Caco-2 (cell line): ENCODE measurements at regions of chr12 and their contacts with region 1.

Region 1: GRCh38 chr12:63052701-63053100 is 98.3 kb downstream of the AVPR1A start:
- DNase-seq: peak; percentile 64 to 75
- H3K4me3 ChIP-seq: no peak overlapping the region
- H3K4me3 Mint-ChIP-seq: no peak overlapping the region
- H3K27ac Mint-ChIP-seq: peak overlapping the region; percentile 30
- H3K4me1 ChIP-seq: peaks cover 34% of the 10 kb centered on the region
- H3K4me1 Mint-ChIP-seq: peaks cover 47% of the 10 kb centered on the region
- H3K27me3 ChIP-seq: no peaks in the 10 kb centered on the region
- H3K27me3 Mint-ChIP-seq: no peaks in the 10 kb centered on the region
- CTCF ChIP-seq: no peak

Region 2: DNA sequence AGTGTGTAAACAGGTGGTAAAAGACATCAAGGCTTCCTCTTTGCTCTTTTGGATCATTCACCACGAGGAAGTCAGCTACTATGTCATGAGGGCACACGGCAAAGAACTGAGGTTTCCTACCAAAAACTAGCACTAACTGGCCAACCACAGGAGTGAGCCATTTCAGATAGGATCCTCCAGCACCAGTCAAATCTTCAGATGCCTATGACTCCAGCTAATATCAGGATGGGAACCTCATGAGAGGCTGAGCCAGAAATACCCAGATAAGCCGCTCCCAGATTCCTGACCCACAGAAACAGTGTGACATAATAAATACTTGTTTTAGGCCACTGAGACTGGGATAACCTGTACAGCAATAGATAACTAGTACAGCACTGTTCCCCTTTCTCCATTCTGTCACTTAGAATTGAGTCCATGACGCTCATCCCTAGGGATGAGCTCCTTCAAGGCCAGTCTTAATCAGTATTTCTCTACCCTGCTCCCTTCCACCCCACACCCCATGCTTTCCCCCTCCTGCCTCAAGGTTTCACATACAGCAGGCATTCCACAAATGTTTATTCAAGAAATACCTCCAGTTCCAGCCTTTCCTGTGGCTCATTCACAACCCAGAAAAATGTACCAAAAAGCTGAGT is 186.1 kb before region 1 on chr12:
- CTCF ChIA-PET with region 1: no interaction called
- POLR2A ChIA-PET with region 1: no interaction called
- intact Hi-C with region 1: loop called (anchors 1 kb)
- DNase-seq: peak; percentile 76 to 86
- H3K4me3 ChIP-seq: no peak overlapping the region
- H3K4me3 Mint-ChIP-seq: peak overlapping the region; percentile 56
- H3K27ac Mint-ChIP-seq: peak overlapping the region; percentile 89
- H3K4me1 ChIP-seq: peaks cover 91% of the 10 kb centered on the region
- H3K4me1 Mint-ChIP-seq: peaks cover 46% of the 10 kb centered on the region
- H3K27me3 ChIP-seq: no peaks in the 10 kb centered on the region
- H3K27me3 Mint-ChIP-seq: no peaks in the 10 kb centered on the region
- CTCF ChIP-seq: no peak

Region 3: DNA sequence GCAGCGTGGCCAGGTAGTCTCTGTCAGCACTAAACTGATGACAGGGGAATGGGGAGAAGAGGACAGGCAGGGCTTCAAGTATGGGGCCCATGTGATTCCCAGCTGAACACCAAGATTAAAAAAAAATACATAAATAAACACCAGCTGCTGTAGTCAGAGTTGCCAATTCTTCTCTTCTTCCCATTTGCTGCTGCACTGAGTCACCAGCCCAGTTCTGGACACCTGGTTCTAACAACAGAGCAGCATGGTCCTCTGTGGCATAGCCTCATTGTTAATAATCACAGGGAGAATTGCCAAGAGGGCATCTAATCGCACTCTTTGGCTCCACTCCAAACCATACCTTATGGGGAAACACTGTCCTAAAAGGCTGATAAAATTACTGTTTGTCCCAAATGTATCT is 132.9 kb before region 1 on chr12:
- CTCF ChIA-PET with region 1: no interaction called
- POLR2A ChIA-PET with region 1: no interaction called
- intact Hi-C with region 1: no loop called
- DNase-seq: no peak
- H3K4me3 ChIP-seq: no peak overlapping the region
- H3K4me3 Mint-ChIP-seq: no peak overlapping the region
- H3K27ac Mint-ChIP-seq: no peak overlapping the region
- H3K4me1 ChIP-seq: peaks cover 4% of the 10 kb centered on the region
- H3K4me1 Mint-ChIP-seq: peaks cover 24% of the 10 kb centered on the region
- H3K27me3 ChIP-seq: no peaks in the 10 kb centered on the region
- H3K27me3 Mint-ChIP-seq: no peaks in the 10 kb centered on the region
- CTCF ChIP-seq: no peak

Region 4: GRCh38 chr12:62998454-62998853 is 54.2 kb before region 1 on chr12:
- CTCF ChIA-PET with region 1: no interaction called
- POLR2A ChIA-PET with region 1: no interaction called
- intact Hi-C with region 1: loop called (anchors 1 kb)
- DNase-seq: peak; percentile 65 to 80
- H3K4me3 ChIP-seq: no peak overlapping the region
- H3K4me3 Mint-ChIP-seq: peak overlapping the region; percentile 67
- H3K27ac Mint-ChIP-seq: peak overlapping the region; percentile 91
- H3K4me1 ChIP-seq: peaks cover 43% of the 10 kb centered on the region
- H3K4me1 Mint-ChIP-seq: peaks cover 30% of the 10 kb centered on the region
- H3K27me3 ChIP-seq: no peaks in the 10 kb centered on the region
- H3K27me3 Mint-ChIP-seq: no peaks in the 10 kb centered on the region
- CTCF ChIP-seq: no peak

Region 5: GRCh38 chr12:63006536-63006935 is 46.2 kb before region 1 on chr12:
- CTCF ChIA-PET with region 1: no interaction called
- POLR2A ChIA-PET with region 1: no interaction called
- intact Hi-C with region 1: loop called (anchors 1 kb)
- DNase-seq: peak; percentile 48 to 55
- H3K4me3 ChIP-seq: no peak overlapping the region
- H3K4me3 Mint-ChIP-seq: peak overlapping the region; percentile 4
- H3K27ac Mint-ChIP-seq: peak overlapping the region; percentile 87
- H3K4me1 ChIP-seq: peaks cover 59% of the 10 kb centered on the region
- H3K4me1 Mint-ChIP-seq: peaks cover 34% of the 10 kb centered on the region
- H3K27me3 ChIP-seq: no peaks in the 10 kb centered on the region
- H3K27me3 Mint-ChIP-seq: no peaks in the 10 kb centered on the region
- CTCF ChIP-seq: no peak

Region 6: DNA sequence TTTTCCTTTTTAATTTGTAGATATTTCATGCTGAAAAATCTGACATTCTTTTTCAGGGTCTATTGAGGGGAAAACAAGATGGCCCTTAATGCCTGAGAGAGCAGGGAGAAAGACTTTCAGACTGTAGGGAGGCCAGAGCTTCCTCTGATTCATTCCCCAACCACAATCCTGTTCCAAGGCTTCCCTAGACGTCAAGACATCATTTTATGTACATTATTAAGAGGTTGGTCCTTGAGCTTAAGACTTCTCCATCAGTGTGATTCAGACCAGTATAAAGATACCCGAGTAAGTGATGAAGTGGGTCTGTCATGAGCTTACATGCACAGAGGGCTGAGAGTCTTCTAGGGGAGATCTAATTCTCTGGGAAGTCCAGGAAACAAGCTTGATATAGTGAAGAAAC is 41.0 kb after region 1 on chr12:
- CTCF ChIA-PET with region 1: no interaction called
- POLR2A ChIA-PET with region 1: no interaction called
- intact Hi-C with region 1: no loop called
- DNase-seq: no peak
- H3K4me3 ChIP-seq: no peak overlapping the region
- H3K4me3 Mint-ChIP-seq: no peak overlapping the region
- H3K27ac Mint-ChIP-seq: no peak overlapping the region
- H3K4me1 ChIP-seq: no peaks in the 10 kb centered on the region; the same call in none of the 2 replicates
- H3K4me1 Mint-ChIP-seq: peaks cover 13% of the 10 kb centered on the region
- H3K27me3 ChIP-seq: no peaks in the 10 kb centered on the region
- H3K27me3 Mint-ChIP-seq: no peaks in the 10 kb centered on the region
- CTCF ChIP-seq: no peak